ENCODE measurements at regions of chr3 and their contacts with region 1.

Region 1: GRCh38 chr3:76107935-76108570 is 322.7 kb upstream of the ZNF717 start:
- DNase-seq: peak; percentile 4
- H3K4me3 ChIP-seq: no peak overlapping the region
- H3K27ac ChIP-seq: no peak overlapping the region
- H3K4me1 ChIP-seq: no peaks in the 10 kb centered on the region
- H3K27me3 ChIP-seq: no peaks in the 10 kb centered on the region
- CTCF ChIP-seq: peak in 3 of 4 experiments; percentile 49 to 64 (median 55)
- POLR2A ChIP-seq: no peak

Region 2: DNA sequence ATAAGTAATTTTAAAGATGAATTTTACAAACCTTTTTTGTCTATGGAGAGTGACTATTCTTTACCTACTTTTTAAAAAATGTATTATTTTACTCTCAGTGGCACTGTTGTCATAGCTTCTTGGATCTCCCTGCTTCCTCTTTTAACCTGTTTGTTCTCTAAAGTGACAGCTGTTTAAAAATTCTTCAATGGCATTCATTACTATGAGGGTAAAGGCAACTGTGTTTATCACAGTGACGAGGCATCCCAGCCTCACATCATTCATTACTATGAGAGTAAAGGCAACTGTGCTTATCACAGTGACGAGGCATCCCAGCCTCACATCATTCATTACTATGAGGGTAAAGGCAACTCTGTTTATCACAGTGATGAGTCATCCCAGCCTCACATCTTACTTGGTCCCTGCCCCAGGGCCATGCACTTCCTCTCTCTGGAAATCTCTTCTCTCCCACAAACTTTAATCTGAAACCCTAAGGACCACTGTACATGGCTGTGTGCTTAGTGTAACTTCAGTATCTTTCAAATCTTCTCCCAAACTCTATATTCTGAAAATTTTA is 221.0 kb before region 1 on chr3:
- intact Hi-C with region 1: no loop called
- DNase-seq: no peak
- H3K4me3 ChIP-seq: no peak overlapping the region
- H3K27ac ChIP-seq: no peak overlapping the region
- H3K4me1 ChIP-seq: no peaks in the 10 kb centered on the region
- H3K27me3 ChIP-seq: no peaks in the 10 kb centered on the region
- CTCF ChIP-seq: no peak
- POLR2A ChIP-seq: no peak

Region 3: GRCh38 chr3:76024640-76025039 is 83.4 kb before region 1 on chr3:
- intact Hi-C with region 1: loop called (anchors 10 kb)
- DNase-seq: no peak
- H3K4me3 ChIP-seq: no peak overlapping the region
- H3K27ac ChIP-seq: no peak overlapping the region
- H3K4me1 ChIP-seq: no peaks in the 10 kb centered on the region
- H3K27me3 ChIP-seq: no peaks in the 10 kb centered on the region
- CTCF ChIP-seq: peak; percentile 12 to 47 (median 30)
- POLR2A ChIP-seq: no peak